Left cardiac atrium (tissue), 4 donors: ENCODE measurements at regions of chr9 and their contacts with region 1.

Region 1: GRCh38 chr9:99356512-99356971 is 134.5 kb downstream of the SEC61B start:
- DNase-seq: peak; percentile 64
- ATAC-seq: peak; percentile 56 to 83

Region 2: GRCh38 chr9:99451112-99451606 is 94.6 kb after region 1 on chr9:
- intact Hi-C with region 1: loop called in 1 of 2 experiments (anchors 2 kb)
- DNase-seq: peak; percentile 51
- ATAC-seq: peak; percentile 96 to 97

Region 3: GRCh38 chr9:99465231-99465907 is 108.8 kb after region 1 on chr9:
- intact Hi-C with region 1: no loop called
- DNase-seq: no peak
- ATAC-seq: peak; percentile 50 to 72

Region 4: DNA sequence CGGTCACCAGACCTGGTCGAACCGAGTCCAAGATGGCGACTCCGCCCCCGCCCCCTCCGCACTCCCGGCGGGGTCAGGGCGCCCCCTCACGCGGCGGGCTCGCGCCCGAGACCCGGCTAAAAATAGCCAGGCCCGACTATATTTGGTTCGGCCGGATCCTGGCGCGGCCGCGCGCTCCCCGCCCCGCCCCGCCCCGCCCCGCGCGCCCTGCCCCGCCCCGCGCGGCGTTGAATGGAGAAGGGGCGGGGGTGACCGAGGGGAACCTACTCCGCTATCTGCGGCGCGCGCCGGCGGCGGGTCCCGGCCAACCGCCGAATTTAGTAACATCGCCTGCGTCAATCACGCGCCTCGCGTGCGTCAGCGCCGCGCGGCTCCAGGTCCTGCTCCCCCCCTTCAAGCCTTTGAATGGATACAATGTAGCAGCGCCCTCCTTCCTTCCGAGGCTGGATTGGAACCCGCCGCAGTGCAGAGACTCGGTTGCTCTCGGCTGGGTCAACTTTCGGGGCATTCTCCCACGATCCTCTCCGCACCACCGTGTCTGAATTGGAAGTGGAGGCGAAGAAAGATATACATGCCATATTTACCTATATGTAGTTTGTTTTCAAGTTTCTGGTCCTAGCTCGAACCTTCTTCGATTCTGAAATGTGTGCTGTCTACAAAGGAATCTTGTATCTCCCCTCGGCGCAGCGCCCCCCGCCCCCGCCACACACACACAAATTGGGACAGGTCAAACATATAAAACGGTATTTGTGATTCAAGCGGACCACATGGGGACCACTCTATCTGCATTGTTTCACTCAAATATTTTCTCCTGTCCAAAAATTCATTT is 463.5 kb after region 1 on chr9:
- intact Hi-C with region 1: loop called in 1 of 2 experiments (anchors 2 kb)
- DNase-seq: peak; percentile 96
- ATAC-seq: peak; percentile 70 to 76